Activated naive CD4-positive, alpha-beta T cell treated with anti-CD3 and anti-CD28 coated beads for 36 hours (primary cell): ENCODE measurements at regions of chr17 and their contacts with region 1.

Region 1: GRCh38 chr17:48084932-48085444 is 16.3 kb downstream of the CBX1 start:
- DNase-seq: no peak
- H3K4me3 Mint-ChIP-seq: no peak overlapping the region
- H3K27ac Mint-ChIP-seq: no peak overlapping the region
- H3K4me1 Mint-ChIP-seq: peaks cover 4% of the 10 kb centered on the region
- H3K27me3 Mint-ChIP-seq: no peaks in the 10 kb centered on the region

Region 2: DNA sequence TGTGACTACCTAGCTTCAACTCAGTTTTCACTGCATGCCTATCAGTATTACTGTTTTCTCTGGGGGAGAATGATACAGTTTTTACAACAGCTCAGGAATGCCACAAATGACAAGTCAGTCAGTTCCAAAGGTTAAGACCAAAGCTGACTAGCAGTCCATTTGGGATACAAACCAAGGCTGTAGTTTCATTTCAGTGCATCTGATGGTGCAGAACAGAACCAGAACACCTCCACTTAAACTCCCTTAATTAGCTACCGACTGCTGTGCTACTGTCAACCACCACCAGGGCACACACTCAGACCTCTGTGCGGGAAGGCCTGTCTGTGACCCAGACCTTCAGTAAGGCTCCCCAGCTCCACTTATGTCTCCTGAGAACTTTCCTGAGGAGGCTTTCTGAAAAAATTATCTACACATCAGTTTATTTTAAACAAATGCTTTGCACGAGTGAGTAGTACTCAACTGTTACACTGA is 16.5 kb before region 1 on chr17:
- CTCF ChIA-PET with region 1: interaction called, 12 read pairs
- intact Hi-C with region 1: no loop called
- DNase-seq: no peak
- H3K4me3 Mint-ChIP-seq: no peak overlapping the region
- H3K27ac Mint-ChIP-seq: peak overlapping the region; percentile 59
- H3K4me1 Mint-ChIP-seq: no peaks in the 10 kb centered on the region
- H3K27me3 Mint-ChIP-seq: no peaks in the 10 kb centered on the region

Region 3: GRCh38 chr17:48095611-48096010 is 10.6 kb after region 1 on chr17:
- CTCF ChIA-PET with region 1: interaction called, 30 read pairs
- intact Hi-C with region 1: no loop called
- DNase-seq: no peak
- H3K4me3 Mint-ChIP-seq: no peak overlapping the region
- H3K27ac Mint-ChIP-seq: no peak overlapping the region
- H3K4me1 Mint-ChIP-seq: peaks cover 23% of the 10 kb centered on the region
- H3K27me3 Mint-ChIP-seq: no peaks in the 10 kb centered on the region

Region 4: DNA sequence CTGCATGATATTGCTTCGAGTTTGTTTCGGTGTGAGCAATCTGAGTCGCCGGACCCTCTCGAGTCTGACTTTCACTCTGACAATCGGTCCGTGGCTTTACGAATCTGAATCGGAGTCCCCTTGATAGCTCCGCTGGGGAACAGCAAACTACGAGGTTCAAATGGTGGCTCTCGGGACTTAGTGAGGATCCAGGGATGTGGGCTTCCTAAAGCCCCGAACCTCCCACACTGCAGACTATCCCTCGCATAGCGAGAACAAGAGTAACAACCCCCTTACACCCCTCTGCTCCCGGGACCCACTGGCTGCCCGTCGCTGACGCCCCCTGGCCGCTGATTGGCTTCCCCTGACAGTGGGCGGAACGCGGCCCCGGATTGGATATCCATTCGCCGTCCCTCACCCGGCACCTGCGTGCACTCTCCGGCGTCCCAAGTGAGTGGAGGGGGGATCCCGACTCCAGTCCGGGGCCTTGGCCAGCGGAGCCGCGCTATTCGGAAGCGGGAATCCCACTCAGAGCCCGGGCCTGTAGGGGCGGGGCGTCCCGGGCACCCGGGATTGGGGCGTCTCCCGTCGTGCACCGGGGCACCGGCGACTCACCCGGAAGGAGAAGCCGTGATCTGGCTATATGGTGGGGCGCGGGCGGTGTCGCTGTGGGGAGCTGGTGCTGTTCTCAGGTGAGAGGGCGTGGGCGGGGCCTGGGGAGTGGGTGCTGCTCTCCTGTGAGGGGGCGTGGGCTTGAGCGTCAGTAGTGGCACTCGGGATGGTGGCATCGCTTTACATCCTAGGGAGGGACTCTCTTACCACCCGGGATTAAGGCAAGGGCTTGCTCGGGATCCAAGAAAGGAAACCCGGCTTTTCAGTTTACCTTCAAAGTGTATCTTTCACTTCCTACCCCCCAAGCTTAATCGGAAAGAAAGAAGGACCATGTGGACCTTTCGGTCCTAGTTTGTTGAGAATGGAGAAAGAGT is 22.5 kb after region 1 on chr17 and contains the start of gene SNX11:
- CTCF ChIA-PET with region 1: interaction called, 14 read pairs
- intact Hi-C with region 1: loop called (anchors 2 kb)
- DNase-seq: peak; percentile 96
- H3K4me3 Mint-ChIP-seq: peak within 1 kb of the TSS; percentile 97
- H3K27ac Mint-ChIP-seq: peak within 1 kb of the TSS; percentile 93
- H3K4me1 Mint-ChIP-seq: peaks cover 56% of the 10 kb centered on the region
- H3K27me3 Mint-ChIP-seq: no peaks in the 10 kb centered on the region
- total RNA-seq, gene SNX11: 20.2 to 23.0 TPM

Region 5: DNA sequence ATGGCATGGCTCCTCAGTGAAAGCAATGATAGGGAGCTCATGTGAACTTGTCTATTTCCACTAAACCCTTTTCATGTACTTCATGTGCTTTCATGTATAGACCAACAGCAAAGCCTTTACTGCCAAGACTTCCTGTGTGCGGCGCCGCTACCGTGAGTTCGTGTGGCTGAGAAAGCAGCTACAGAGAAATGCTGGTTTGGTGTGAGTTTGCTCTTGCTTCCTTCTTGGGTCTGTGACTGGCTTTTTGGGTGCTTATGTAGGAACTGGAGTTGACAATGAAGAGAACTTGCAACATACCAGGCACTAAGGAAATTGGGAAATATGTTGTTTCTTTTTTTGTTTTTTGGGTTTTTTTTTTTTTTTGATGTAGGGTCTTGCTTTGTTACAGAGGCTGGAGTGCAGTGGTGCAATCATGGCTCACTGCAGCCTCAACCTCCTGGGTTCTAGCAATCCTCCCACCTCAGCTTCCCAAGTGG is 28.3 kb after region 1 on chr17:
- CTCF ChIA-PET with region 1: interaction called, 14 read pairs
- intact Hi-C with region 1: loop called (anchors 2 kb)
- DNase-seq: peak; percentile 79
- H3K4me3 Mint-ChIP-seq: peak overlapping the region; percentile 46
- H3K27ac Mint-ChIP-seq: peak overlapping the region; percentile 94
- H3K4me1 Mint-ChIP-seq: peaks cover 46% of the 10 kb centered on the region
- H3K27me3 Mint-ChIP-seq: no peaks in the 10 kb centered on the region

Region 6: DNA sequence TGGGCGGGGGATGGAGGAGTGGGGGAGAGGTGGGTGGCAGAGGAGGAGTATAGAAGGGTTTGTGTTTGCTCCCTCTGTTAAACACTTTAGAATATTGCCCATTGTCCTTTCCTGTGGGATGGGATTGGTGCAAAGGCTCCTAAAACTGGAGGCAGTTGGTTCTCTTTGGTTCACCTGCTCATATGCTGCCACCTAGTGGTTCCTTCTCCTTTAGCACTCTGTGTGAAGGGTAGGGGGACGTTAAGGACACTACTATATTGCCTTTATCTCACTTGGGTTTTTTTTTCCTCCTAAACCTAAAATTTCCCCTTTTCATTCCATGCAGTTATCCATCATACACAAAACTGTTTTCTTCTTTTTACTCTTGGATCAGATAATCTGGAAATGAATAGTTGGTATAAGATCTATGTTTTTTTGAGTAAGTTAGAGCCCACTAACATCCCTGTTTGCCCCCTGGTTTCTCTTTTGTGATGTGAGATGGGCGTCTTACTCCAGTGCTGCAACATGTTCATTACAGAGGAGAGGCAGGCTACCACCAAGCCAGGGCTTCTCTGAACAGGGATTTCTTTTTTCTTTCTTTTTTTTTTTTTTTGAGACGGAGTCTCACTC is 46.3 kb after region 1 on chr17:
- CTCF ChIA-PET with region 1: interaction called, 60 read pairs
- intact Hi-C with region 1: loop called (anchors 1 kb)
- DNase-seq: peak; percentile 75
- H3K4me3 Mint-ChIP-seq: no peak overlapping the region
- H3K27ac Mint-ChIP-seq: no peak overlapping the region
- H3K4me1 Mint-ChIP-seq: no peaks in the 10 kb centered on the region
- H3K27me3 Mint-ChIP-seq: no peaks in the 10 kb centered on the region